Kidney (tissue), 22 donors: ENCODE measurements at regions of chr2 and their contacts with region 1.

Region 1: DNA sequence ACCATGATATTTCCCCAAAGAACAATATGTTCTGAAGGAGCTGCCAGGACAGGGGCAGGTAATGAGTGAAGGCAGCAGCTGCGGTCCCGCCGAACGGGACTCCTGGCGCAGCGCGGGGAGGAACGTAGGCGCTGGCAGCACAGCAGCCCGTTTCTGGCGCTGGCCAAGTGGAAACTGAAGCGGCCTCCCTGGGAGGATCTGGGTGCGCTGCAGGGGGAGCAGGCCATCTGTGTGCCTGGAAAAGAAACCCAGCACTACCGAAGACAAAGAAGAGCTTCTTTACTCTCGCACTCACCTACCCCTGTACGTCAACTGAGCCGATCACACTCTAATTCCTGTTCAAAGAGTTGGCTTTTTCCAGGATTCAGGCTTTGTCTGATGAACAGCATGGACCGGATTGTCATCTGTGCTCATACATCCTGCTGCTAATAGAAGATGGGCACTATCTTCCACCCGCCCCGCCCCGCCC is 11.8 kb downstream of the G6PC2 start:
- DNase-seq: peak in 3 of 5 donors; percentile 22 to 69 (median 37)
- H3K4me3 ChIP-seq: peak overlapping the region; percentile 18 to 42 (median 37)
- H3K27ac ChIP-seq: no peak overlapping the region
- H3K4me1 ChIP-seq: no peaks in the 10 kb centered on the region
- H3K27me3 ChIP-seq: no peaks in the 10 kb centered on the region
- CTCF ChIP-seq: no peak

Region 2: GRCh38 chr2:168346725-168347477 is 566.0 kb before region 1 on chr2:
- intact Hi-C with region 1: loop called (anchors 10 kb)
- DNase-seq: peak; percentile 73 to 91 (median 82)
- H3K4me3 ChIP-seq: peak overlapping the region; percentile 70 to 83 (median 74)
- H3K27ac ChIP-seq: no peak overlapping the region
- H3K4me1 ChIP-seq: no peaks in the 10 kb centered on the region
- H3K27me3 ChIP-seq: no peaks in the 10 kb centered on the region
- CTCF ChIP-seq: peak; percentile 92

Region 3: GRCh38 chr2:168773719-168774521 is 139.0 kb before region 1 on chr2:
- intact Hi-C with region 1: loop called (anchors 10 kb)
- DNase-seq: peak in 3 of 5 donors; percentile 25 to 74 (median 55)
- H3K4me3 ChIP-seq: no peak overlapping the region
- H3K27ac ChIP-seq: no peak overlapping the region
- H3K4me1 ChIP-seq: peaks cover 0 to 5% (median 4%) of the 10 kb centered on the region in 3 donors
- H3K27me3 ChIP-seq: no peaks in the 10 kb centered on the region
- CTCF ChIP-seq: peak; percentile 90